CD4-positive, alpha-beta memory T cell (primary cell): ENCODE measurements at regions of chr19 and their contacts with region 1.

Region 1: DNA sequence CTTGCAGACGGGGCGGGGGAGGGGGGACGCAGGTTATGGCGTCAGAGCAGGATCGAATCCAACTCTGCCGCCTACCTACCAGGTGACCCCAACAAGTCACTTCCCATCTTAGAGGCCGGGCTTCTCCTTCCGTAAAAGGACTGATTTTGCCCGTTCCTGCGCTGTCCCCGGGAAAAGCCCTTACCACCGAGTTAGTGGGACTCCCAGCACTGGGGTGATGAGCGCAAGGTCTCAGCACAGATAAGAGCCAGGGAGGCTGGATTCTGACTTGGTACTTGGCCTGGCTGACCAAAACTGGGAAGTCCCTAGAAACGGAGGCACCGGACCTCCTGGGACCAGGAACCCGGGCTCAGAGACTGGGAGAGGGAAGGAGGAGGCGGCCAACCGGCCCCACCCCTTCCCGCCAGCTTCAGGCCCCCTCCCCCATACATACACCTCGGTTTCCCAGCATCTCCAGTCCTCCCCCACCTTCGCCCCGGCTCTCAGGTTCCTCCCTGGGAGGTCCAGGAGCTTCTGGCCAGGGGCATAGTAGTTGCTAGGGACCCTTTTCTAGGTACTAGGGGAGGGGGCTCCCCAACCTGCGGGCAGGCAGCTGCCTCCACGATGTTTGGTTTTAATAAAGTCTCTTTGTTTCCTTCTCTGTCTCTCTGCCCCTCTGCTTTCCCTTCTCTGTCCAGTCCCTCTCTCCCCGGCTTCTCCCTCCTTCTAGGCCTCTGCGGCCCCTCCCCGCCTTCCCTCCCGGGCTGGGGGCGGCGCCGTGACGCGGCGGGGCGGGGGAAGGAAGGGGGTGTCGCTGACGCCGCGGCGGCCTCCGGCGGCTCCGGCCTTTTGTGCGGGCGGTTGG is at the start of gene GRAMD1A:
- DNase-seq: peak; percentile 52 to 69 (median 59)
- H3K4me3 ChIP-seq: peak within 1 kb of the TSS; percentile 50 to 83
- H3K4me3 Mint-ChIP-seq: peak within 1 kb of the TSS; percentile 94 to 99 (median 99)
- H3K27ac ChIP-seq: peak within 1 kb of the TSS; percentile 88
- H3K27ac Mint-ChIP-seq: peak within 1 kb of the TSS; percentile 88 to 99 (median 98)
- H3K4me1 ChIP-seq: peaks cover 79% of the 10 kb centered on the region
- H3K4me1 Mint-ChIP-seq: peaks cover 48 to 86% (median 67%) of the 10 kb centered on the region in 4 donors
- H3K27me3 ChIP-seq: no peaks in the 10 kb centered on the region
- H3K27me3 Mint-ChIP-seq: no peaks in the 10 kb centered on the region
- total RNA-seq, gene GRAMD1A: 205 to 221 TPM

Region 2: GRCh38 chr19:34963573-34964409 is 35.9 kb before region 1 on chr19 and contains the start of gene ZNF792:
- CTCF ChIA-PET with region 1: no interaction called
- POLR2A ChIA-PET with region 1: interaction called, 18 read pairs
- intact Hi-C with region 1: no loop called
- DNase-seq: peak; percentile 36 to 57 (median 39)
- H3K4me3 ChIP-seq: peak within 1 kb of the TSS; percentile 62 to 80
- H3K4me3 Mint-ChIP-seq: peak within 1 kb of the TSS; percentile 93 to 99 (median 97)
- H3K27ac ChIP-seq: peak within 1 kb of the TSS; percentile 49
- H3K27ac Mint-ChIP-seq: peak within 1 kb of the TSS; percentile 88 to 97 (median 93)
- H3K4me1 ChIP-seq: peaks cover 18% of the 10 kb centered on the region
- H3K4me1 Mint-ChIP-seq: peaks cover 18 to 28% (median 24%) of the 10 kb centered on the region in 4 donors
- H3K27me3 ChIP-seq: no peaks in the 10 kb centered on the region
- H3K27me3 Mint-ChIP-seq: no peaks in the 10 kb centered on the region
- total RNA-seq, gene ZNF792: 33.9 to 34.7 TPM

Region 3: DNA sequence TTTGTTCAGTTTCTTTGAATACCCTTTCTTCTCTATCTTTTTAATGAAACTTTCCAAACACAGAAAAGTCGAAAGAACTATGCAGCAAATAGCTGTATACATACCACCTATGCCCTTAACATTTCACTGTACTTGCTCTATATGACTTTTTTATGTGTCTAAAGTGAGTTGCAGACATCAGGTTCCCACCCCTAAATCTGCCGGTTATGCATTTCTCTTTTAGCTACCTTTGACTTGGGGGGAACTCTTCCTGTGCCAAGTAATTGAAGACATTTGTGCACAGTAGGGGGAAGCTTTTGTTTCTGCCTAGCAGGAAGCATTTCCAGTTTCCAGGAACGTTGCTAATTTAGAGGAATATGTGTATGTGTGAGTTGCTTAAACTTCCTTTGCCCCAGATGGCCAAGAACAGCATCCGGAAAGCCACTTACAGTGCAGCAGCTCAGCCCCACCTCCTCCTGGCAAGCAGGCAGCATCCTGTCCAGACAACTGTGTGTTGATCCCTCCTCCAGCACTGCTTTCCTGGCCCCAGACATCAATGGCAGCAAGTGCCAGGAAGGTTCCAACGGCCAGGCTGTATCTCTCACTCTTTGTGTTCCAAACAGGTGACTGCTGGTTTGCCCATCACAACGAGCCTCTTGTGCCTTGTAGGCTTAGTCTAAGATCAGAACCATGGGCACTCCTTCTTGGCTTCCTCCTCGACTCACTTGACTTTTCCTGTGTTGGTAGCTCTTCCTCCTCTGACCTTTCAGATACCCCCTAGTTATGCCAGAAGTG is 14.3 kb before region 1 on chr19:
- CTCF ChIA-PET with region 1: interaction called, 3 read pairs
- POLR2A ChIA-PET with region 1: interaction called, 28 read pairs
- intact Hi-C with region 1: no loop called
- DNase-seq: peak in 1 of 5 donors; percentile 15
- H3K4me3 ChIP-seq: no peak overlapping the region
- H3K4me3 Mint-ChIP-seq: peak overlapping the region; percentile 7 to 66 (median 50)
- H3K27ac ChIP-seq: no peak overlapping the region
- H3K27ac Mint-ChIP-seq: peak overlapping the region in 6 of 7 donors; percentile 19 to 83 (median 60)
- H3K4me1 ChIP-seq: peaks cover 10% of the 10 kb centered on the region
- H3K4me1 Mint-ChIP-seq: peaks cover 12 to 19% (median 13%) of the 10 kb centered on the region in 4 donors
- H3K27me3 ChIP-seq: no peaks in the 10 kb centered on the region
- H3K27me3 Mint-ChIP-seq: peaks cover 0 to 2% of the 10 kb centered on the region in 2 donors